Activated CD4-positive, alpha-beta T cell treated with anti-CD3 and anti-CD28 coated beads for 36 hours (primary cell): ENCODE measurements at regions of chr10 and their contacts with region 1.

Region 1: DNA sequence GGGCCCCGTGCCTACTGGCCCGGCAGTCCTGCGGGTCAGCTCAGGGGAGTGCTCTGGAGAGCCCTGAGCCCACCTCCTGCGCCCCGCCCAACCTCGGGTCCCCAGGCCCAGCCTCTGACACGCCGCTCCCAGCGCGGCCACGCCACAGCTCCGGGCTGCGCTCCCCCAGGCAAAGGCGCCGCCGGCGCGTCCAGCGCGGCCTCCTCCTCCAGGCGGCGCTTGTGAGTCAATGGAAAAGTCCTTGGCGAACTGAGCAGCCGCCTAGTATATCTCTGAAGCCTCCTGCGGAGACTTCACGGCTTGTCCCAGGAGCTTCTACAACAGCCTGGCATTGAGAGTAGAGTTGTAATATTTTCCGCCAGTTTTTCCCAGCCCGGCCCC is 29.5 kb upstream of the BMS1 start:
- DNase-seq: peak; percentile 87
- ATAC-seq: peak; percentile 88
- H3K4me3 Mint-ChIP-seq: peak overlapping the region; percentile 59
- H3K27ac Mint-ChIP-seq: no peak overlapping the region
- H3K4me1 Mint-ChIP-seq: peaks cover 5% of the 10 kb centered on the region
- H3K27me3 Mint-ChIP-seq: peaks cover 45% of the 10 kb centered on the region

Region 2: GRCh38 chr10:42707234-42707633 is 45.9 kb before region 1 on chr10:
- CTCF ChIA-PET with region 1: no interaction called
- POLR2A ChIA-PET with region 1: no interaction called
- intact Hi-C with region 1: no loop called
- DNase-seq: no peak
- ATAC-seq: no peak
- H3K4me3 Mint-ChIP-seq: no peak overlapping the region
- H3K27ac Mint-ChIP-seq: no peak overlapping the region
- H3K4me1 Mint-ChIP-seq: no peaks in the 10 kb centered on the region
- H3K27me3 Mint-ChIP-seq: peaks cover 25% of the 10 kb centered on the region

Region 3: DNA sequence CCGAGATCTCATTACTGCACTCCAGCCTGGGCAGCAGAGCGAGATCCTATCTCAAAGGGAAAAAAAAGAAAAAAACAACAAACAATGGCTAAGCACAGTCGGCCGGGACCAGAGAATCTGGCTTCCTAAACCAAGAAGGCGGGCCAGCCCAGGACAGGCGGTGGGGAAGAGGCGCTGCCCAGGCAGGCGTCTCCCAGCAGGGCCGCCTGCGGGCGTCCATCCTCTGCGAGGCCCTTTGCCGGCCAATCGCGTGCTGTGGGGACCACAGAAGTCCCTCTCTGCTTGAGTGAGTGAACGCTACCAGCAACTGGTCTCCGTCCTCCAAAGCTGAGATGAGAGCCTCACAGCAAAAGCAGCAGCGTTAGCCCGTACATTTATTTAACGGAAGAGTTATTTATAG is 14.8 kb after region 1 on chr10:
- CTCF ChIA-PET with region 1: interaction called, 10 read pairs
- POLR2A ChIA-PET with region 1: no interaction called
- intact Hi-C with region 1: no loop called
- DNase-seq: no peak
- ATAC-seq: no peak
- H3K4me3 Mint-ChIP-seq: no peak overlapping the region
- H3K27ac Mint-ChIP-seq: no peak overlapping the region
- H3K4me1 Mint-ChIP-seq: no peaks in the 10 kb centered on the region
- H3K27me3 Mint-ChIP-seq: peaks cover 38% of the 10 kb centered on the region

Region 4: DNA sequence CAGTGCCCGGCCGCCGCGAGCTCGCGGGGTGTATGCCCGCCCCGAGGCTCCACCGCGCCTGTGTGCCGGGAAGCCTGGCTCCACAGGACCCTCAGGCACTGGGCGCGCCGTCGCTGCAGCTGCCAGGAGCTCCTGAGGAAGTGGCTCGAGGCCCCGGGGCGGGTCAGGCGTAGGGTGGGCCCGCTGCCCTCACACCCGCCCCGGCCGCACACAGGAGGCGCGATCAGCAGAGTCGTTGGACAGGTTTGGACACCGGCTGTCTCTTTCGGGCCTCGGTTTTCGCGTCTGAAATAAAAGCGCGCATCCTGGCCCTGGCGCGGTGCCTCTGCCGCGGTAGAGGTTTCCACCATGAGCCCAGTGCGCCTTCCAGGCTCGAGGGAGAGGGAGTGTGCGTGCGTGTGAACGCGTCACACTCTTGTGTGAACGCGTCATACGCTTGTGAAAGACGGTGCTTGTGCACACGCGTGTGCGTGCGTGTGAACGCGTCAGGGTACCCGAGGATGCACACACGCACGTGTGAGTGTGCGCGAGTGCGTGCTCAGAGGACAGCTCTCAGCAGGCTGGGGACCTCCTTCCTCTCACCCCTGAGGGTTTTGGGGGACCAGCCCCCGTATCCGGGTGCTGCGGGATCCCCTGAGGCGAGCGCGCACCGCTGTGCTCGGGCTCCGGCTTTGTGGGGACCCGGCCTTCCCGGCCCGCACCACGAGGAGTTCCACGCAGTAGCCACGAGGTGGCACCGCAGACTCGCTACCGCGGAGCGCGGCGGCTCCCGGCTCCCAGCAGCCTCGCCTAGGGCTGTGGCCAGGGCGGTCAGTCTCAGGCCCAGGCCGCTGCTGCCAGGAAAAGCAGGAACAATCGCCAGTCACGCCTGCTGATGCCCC is 113.2 kb after region 1 on chr10:
- CTCF ChIA-PET with region 1: no interaction called
- POLR2A ChIA-PET with region 1: no interaction called
- intact Hi-C with region 1: loop called in 1 of 2 experiments (anchors 5 kb)
- DNase-seq: peak; percentile 75
- ATAC-seq: peak; percentile 68
- H3K4me3 Mint-ChIP-seq: no peak overlapping the region
- H3K27ac Mint-ChIP-seq: no peak overlapping the region
- H3K4me1 Mint-ChIP-seq: peaks cover 4% of the 10 kb centered on the region
- H3K27me3 Mint-ChIP-seq: peaks cover 32% of the 10 kb centered on the region

Region 5: DNA sequence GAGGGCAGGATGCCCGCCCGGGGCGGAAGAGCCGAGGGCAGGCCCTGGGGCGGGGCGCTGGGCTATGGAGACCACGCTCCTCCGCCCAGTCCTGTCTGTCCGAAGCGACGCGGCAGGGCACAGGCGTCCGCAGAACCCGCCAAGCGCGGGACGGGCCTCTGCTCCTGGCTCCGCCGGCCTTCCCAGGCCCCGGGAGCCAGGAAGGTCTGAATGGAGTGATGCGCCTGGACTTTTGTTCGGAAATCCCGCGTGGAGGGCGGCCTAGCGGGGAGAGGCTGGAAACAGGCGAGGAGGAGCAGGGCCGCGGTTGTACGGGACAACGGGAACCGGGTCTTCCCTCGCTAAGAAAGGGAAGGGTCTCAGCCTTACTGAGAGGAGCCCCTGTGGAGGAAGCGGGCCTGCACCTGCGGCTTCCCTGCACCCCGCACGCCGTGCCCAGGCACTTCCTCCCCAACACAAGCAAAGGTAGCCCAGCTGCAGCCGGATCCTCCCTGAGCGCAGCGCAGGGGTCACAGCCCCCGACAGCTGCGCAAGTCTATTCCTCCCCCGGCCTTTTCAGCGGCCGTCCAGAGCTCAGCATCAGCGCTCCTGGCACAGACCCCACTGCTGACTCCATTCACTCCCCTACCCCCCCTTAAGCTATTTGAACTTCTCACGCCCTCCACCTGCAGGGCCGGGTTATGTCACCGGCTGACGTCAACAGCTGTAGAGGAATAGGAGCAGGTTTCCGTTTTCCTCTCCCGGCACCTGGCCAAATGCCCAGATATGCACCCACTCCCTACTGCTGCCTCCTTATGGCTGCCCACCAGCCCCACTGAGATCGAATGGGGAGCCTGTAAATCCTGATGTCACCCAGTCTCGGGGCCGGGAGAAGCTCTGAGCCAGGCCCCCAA is 180.6 kb after region 1 on chr10:
- CTCF ChIA-PET with region 1: no interaction called
- POLR2A ChIA-PET with region 1: no interaction called
- intact Hi-C with region 1: loop called in 1 of 2 experiments (anchors 10 kb)
- DNase-seq: peak; percentile 47
- ATAC-seq: peak; percentile 55
- H3K4me3 Mint-ChIP-seq: peak overlapping the region; percentile 64
- H3K27ac Mint-ChIP-seq: no peak overlapping the region
- H3K4me1 Mint-ChIP-seq: peaks cover 10% of the 10 kb centered on the region
- H3K27me3 Mint-ChIP-seq: peaks cover 11% of the 10 kb centered on the region

Region 6: DNA sequence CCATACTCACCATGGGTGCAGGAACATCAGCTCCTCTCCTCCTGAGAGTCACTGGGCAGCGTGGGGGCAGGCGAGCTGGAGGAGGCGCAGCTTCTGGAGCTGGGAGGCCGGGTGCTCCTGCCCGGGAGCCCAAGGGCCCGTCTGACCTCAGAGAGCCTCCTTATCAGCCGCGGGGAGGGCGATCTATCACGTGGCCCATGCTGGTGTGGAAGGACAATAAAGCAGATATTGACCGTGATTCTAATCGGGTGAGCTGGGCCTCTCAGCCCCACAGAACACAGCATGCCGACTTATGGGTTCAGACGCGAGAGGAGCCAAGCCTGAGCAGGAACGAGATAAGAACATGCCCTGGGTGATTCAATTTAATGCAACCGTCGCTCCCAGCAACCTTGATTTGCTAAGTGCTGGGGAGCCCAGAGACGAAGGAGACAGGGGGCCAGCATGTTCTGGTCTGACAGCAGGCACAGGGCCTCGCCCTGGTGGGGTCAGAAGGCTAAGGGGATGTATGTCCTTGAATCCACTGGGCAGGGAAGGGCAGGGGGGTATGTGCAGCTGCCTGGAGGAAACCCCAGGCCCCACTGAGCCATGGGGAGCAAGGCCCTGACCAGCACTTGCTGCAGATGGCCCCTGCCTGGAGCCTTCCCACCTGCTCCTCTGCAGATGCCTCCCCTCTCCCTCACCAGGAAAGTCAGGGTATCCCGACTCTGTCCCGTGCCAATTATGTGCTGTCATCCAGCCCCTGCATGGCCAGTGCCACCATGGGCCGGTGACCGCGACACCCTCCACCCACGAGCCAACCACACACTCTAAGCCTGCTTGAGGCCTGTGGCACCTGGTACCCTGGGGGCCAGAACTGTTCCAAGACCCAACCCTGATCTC is 228.5 kb after region 1 on chr10:
- CTCF ChIA-PET with region 1: no interaction called
- POLR2A ChIA-PET with region 1: no interaction called
- intact Hi-C with region 1: no loop called
- DNase-seq: peak; percentile 3
- ATAC-seq: no peak
- H3K4me3 Mint-ChIP-seq: no peak overlapping the region
- H3K27ac Mint-ChIP-seq: no peak overlapping the region
- H3K4me1 Mint-ChIP-seq: no peaks in the 10 kb centered on the region
- H3K27me3 Mint-ChIP-seq: no peaks in the 10 kb centered on the region